WTC11 (cell line): ENCODE measurements at regions of chr5 and their contacts with region 1.

Region 1: GRCh38 chr5:179599975-179600391 is 23.5 kb downstream of the HNRNPH1 start:
- DNase-seq: no peak
- ATAC-seq: no peak
- H3K4me3 Mint-ChIP-seq: no peak overlapping the region
- H3K27ac Mint-ChIP-seq: no peak overlapping the region
- H3K4me1 Mint-ChIP-seq: no peaks in the 10 kb centered on the region
- H3K27me3 Mint-ChIP-seq: no peaks in the 10 kb centered on the region
- CTCF ChIP-seq: no peak

Region 2: GRCh38 chr5:179198825-179199224 is 401.2 kb before region 1 on chr5:
- CTCF ChIA-PET with region 1: no interaction called
- POLR2A ChIA-PET with region 1: interaction called, 10 read pairs
- DNase-seq: no peak
- ATAC-seq: no peak
- H3K4me3 Mint-ChIP-seq: no peak overlapping the region
- H3K27ac Mint-ChIP-seq: no peak overlapping the region
- H3K4me1 Mint-ChIP-seq: peaks cover 3% of the 10 kb centered on the region; the same call in 1 of the 2 replicates
- H3K27me3 Mint-ChIP-seq: no peaks in the 10 kb centered on the region; the same call in 1 of the 2 replicates
- CTCF ChIP-seq: no peak

Region 3: DNA sequence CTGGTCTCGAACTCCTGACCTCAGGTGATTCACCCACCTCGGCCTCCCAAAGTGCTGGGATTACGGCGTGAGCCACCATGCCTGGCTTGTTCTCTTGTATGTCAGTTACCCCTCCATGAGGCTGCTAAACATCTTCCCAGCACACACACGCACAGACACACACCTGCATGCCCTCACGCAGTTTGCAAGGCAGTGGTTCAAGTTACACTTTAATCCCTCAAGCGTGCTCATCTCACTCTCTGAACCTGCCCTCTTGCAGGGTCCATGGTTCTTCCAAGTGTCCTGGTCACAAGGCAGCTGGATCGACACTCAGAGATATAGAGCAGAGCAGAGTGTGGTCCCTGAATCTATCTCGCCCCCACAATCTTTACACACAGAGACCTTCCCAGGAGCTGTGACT is 83.8 kb before region 1 on chr5:
- CTCF ChIA-PET with region 1: no interaction called
- POLR2A ChIA-PET with region 1: no interaction called
- DNase-seq: no peak
- ATAC-seq: no peak
- H3K4me3 Mint-ChIP-seq: no peak overlapping the region
- H3K27ac Mint-ChIP-seq: no peak overlapping the region
- H3K4me1 Mint-ChIP-seq: peaks cover 23% of the 10 kb centered on the region
- H3K27me3 Mint-ChIP-seq: peaks cover 8% of the 10 kb centered on the region; the same call in 1 of the 2 replicates
- CTCF ChIP-seq: no peak

Region 4: GRCh38 chr5:179763215-179763945 is 163.4 kb after region 1 on chr5:
- CTCF ChIA-PET with region 1: no interaction called
- POLR2A ChIA-PET with region 1: no interaction called
- DNase-seq: peak; percentile 63
- ATAC-seq: peak; percentile 82
- H3K4me3 Mint-ChIP-seq: no peak overlapping the region
- H3K27ac Mint-ChIP-seq: peak overlapping the region; percentile 86
- H3K4me1 Mint-ChIP-seq: peaks cover 41% of the 10 kb centered on the region
- H3K27me3 Mint-ChIP-seq: no peaks in the 10 kb centered on the region
- CTCF ChIP-seq: peak; percentile 64

Region 5: GRCh38 chr5:179792612-179793467 is 192.9 kb after region 1 on chr5:
- CTCF ChIA-PET with region 1: no interaction called
- POLR2A ChIA-PET with region 1: no interaction called
- DNase-seq: no peak
- ATAC-seq: no peak
- H3K4me3 Mint-ChIP-seq: no peak overlapping the region
- H3K27ac Mint-ChIP-seq: no peak overlapping the region
- H3K4me1 Mint-ChIP-seq: peaks cover 18% of the 10 kb centered on the region
- H3K27me3 Mint-ChIP-seq: peaks cover 2% of the 10 kb centered on the region; the same call in 1 of the 2 replicates
- CTCF ChIP-seq: no peak